GM12878 (cell line): ENCODE measurements at regions of chr10 and their contacts with region 1.

Region 1: DNA sequence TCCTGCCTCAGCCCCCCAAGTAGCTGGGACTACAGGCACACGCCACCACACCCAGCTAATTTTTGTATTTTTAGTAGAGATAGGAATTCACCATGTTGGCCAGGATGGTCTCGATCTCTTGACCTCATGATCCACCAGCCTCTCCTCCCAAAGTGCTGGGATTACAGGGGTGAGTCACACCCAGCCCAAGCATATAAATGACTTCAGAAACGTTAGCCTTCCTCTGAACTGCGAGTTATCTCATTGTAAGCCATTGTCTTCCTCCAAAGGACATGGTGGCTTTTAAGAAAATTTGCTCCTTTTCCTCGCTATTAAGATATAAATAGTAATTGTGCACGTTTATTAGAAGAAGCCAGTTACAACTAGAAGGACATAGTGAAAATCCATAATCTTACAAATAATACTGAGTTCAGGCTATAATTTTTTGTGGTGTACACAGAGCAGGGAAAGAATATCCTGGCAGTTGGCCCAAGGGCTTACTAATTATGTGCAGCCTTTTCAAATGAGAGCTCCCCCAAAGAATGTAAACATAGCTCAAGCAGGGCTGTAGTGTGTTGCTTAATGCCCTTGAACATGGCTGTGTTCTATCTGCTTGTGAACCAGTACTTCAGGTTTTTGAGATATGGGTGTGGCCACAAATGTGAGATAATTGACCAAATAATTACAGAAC is 495.8 kb downstream of the PARD3 start:
- DNase-seq: no peak
- ATAC-seq: no peak
- H3K4me3 ChIP-seq: no peak overlapping the region
- H3K27ac ChIP-seq: no peak overlapping the region
- H3K4me1 ChIP-seq: no peaks in the 10 kb centered on the region
- H3K27me3 ChIP-seq: no peaks in the 10 kb centered on the region
- CTCF ChIP-seq: no peak
- EP300 ChIP-seq: no peak
- POLR2A ChIP-seq: no peak
- RAD21 ChIP-seq: no peak

Region 2: GRCh38 chr10:34333513-34333912 is 14.2 kb after region 1 on chr10:
- CTCF ChIA-PET with region 1: interaction called, 11 read pairs
- POLR2A ChIA-PET with region 1: interaction called, 5 read pairs
- RAD21 ChIA-PET with region 1: interaction called, 4 read pairs
- SMC1A ChIA-PET with region 1: interaction called, 72 read pairs
- in situ Hi-C with region 1: no loop called
- intact Hi-C with region 1: no loop called
- DNase-seq: no peak
- ATAC-seq: no peak
- H3K4me3 ChIP-seq: no peak overlapping the region
- H3K27ac ChIP-seq: no peak overlapping the region
- H3K4me1 ChIP-seq: no peaks in the 10 kb centered on the region
- H3K27me3 ChIP-seq: no peaks in the 10 kb centered on the region
- CTCF ChIP-seq: no peak
- EP300 ChIP-seq: no peak
- POLR2A ChIP-seq: no peak
- RAD21 ChIP-seq: no peak

Region 3: GRCh38 chr10:34392641-34393170 is 73.4 kb after region 1 on chr10:
- CTCF ChIA-PET with region 1: no interaction called
- POLR2A ChIA-PET with region 1: no interaction called
- RAD21 ChIA-PET with region 1: no interaction called
- SMC1A ChIA-PET with region 1: no interaction called
- in situ Hi-C with region 1: no loop called
- intact Hi-C with region 1: no loop called
- DNase-seq: no peak
- ATAC-seq: no peak
- H3K4me3 ChIP-seq: no peak overlapping the region
- H3K27ac ChIP-seq: no peak overlapping the region
- H3K4me1 ChIP-seq: no peaks in the 10 kb centered on the region
- H3K27me3 ChIP-seq: no peaks in the 10 kb centered on the region
- CTCF ChIP-seq: no peak
- EP300 ChIP-seq: no peak
- POLR2A ChIP-seq: no peak
- RAD21 ChIP-seq: no peak

Region 4: DNA sequence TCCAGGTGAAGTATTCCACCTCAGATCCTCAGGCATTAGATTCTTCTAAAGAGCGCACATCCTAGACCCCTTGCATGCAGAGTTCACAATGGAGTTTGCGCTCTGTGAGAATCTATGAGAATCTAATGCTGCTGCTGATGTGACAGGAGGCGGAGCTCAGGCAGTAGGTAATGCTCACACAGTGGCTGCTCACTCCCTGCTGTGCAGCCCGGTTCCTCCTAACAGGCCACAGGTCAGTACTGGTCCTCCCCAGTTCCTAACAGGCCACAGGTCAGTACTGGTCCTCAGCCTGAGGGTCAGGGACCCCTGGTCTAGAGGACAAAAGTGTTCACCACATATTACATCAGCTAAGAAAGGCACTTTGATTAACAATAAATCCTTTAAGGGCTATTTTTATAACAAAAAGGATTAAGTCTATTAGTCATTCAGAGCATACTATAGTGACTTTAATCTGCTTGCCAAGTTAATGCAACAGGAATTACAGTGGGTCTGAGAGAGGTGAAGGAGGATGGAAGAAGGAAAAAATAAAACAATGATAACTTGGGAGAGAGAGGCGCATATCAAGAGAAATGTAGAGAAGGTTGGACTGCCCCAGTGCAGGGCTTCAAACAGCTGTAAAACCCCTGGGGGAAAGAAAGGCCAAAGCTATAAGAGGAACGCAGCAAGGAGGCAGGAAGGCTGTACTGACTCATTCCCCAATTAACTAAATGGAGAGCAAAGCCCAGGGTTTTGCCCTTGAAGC is 721.6 kb after region 1 on chr10:
- CTCF ChIA-PET with region 1: no interaction called
- POLR2A ChIA-PET with region 1: no interaction called
- RAD21 ChIA-PET with region 1: no interaction called
- SMC1A ChIA-PET with region 1: no interaction called
- in situ Hi-C with region 1: no loop called
- intact Hi-C with region 1: no loop called
- DNase-seq: no peak
- ATAC-seq: no peak
- H3K4me3 ChIP-seq: no peak overlapping the region
- H3K27ac ChIP-seq: no peak overlapping the region
- H3K4me1 ChIP-seq: no peaks in the 10 kb centered on the region
- H3K27me3 ChIP-seq: no peaks in the 10 kb centered on the region
- CTCF ChIP-seq: no peak
- EP300 ChIP-seq: no peak
- POLR2A ChIP-seq: no peak
- RAD21 ChIP-seq: no peak